ENCODE measurements at regions of chr11 and their contacts with region 1.

Region 1: GRCh38 chr11:33829433-33830141 is 55.3 kb upstream of the FBXO3 start:
- DNase-seq: peak; percentile 71 to 74
- H3K4me3 ChIP-seq: 0 out of 2 replicates have a peak overlapping the region, but pooled peaks have one; percentile 4
- H3K4me1 ChIP-seq: no peaks in the 10 kb centered on the region
- H3K27me3 ChIP-seq: peaks cover 26% of the 10 kb centered on the region

Region 2: GRCh38 chr11:33362051-33362910 is 467.3 kb before region 1 on chr11:
- in situ Hi-C with region 1: loop called (anchors 25 kb)
- DNase-seq: peak in 1 of 2 experiments; percentile 46
- H3K4me3 ChIP-seq: no peak overlapping the region
- H3K4me1 ChIP-seq: no peaks in the 10 kb centered on the region
- H3K27me3 ChIP-seq: no peaks in the 10 kb centered on the region; the same call in 1 of the 2 replicates

Region 3: GRCh38 chr11:33557201-33557600 is 272.4 kb before region 1 on chr11:
- in situ Hi-C with region 1: no loop called
- DNase-seq: peak in 1 of 2 experiments; percentile 30
- H3K4me3 ChIP-seq: no peak overlapping the region
- H3K4me1 ChIP-seq: no peaks in the 10 kb centered on the region
- H3K27me3 ChIP-seq: no peaks in the 10 kb centered on the region

Region 4: GRCh38 chr11:34013898-34014571 is 184.4 kb after region 1 on chr11:
- in situ Hi-C with region 1: no loop called
- DNase-seq: no peak
- H3K4me3 ChIP-seq: no peak overlapping the region
- H3K4me1 ChIP-seq: no peaks in the 10 kb centered on the region
- H3K27me3 ChIP-seq: no peaks in the 10 kb centered on the region

Region 5: DNA sequence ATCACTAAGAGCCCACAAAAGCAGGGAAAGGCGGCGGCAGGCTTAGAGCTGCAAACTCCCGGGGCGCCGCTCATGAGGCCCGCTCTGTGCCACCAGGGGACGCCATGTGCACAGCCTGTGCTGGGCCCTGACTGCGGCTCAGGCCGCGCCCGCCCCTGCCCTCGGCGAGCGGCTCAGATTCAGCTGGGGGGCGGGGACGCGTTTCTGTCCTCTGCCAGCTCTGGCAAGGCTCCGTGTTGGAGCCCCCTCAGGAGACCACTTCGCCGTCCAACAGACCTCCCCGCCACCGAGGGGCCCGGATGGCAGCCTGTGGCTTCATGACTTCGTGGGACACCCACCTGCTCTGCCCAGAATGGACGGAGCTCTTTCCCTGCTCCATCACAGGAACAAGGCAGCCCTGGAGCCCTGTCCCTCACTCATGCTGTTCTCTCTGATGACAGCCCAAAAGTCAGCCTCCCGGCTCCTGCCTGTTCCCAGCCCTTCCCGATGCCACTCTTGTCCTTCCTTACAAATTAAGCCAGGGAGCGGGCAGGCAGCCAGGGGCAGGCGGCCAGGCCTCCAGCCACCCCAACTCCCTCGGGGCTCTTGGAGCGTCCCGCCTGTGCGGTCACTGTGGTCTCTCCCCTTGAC is 344.9 kb after region 1 on chr11:
- in situ Hi-C with region 1: no loop called
- DNase-seq: peak; percentile 46 to 90
- H3K4me3 ChIP-seq: peak overlapping the region; percentile 13
- H3K4me1 ChIP-seq: peaks cover 11% of the 10 kb centered on the region
- H3K27me3 ChIP-seq: no peaks in the 10 kb centered on the region

Region 6: GRCh38 chr11:34243726-34244464 is 414.3 kb after region 1 on chr11:
- in situ Hi-C with region 1: no loop called
- DNase-seq: no peak
- H3K4me3 ChIP-seq: no peak overlapping the region
- H3K4me1 ChIP-seq: peaks cover 8% of the 10 kb centered on the region; the same call in 1 of the 2 replicates
- H3K27me3 ChIP-seq: no peaks in the 10 kb centered on the region

Region 7: DNA sequence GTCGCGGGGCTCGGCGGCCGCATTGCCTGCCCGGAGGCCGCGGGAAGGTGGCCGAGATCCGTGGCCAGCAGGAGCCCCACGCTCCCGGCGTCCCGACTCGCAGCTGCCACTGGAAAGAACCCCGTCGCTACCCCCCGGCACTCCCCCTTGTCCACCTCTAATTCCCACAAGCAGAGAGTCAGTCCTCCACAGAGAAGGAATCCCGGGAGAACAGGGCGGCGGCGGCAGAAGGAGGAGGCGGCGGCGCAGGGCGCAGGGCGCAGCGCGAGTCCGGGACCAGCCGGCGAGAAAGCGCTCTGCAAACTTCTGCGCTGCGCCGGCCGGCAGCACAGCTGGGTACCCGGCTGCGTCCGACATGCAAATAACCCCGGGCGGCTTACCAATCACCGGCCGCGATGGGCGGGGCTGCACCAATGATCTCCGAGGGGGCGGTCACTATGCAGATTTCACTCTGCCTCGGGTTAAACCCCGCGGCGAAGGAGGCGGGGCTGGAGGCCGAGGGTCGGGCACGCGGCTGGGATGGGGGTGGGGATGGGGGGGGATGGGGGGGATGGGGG is 528.2 kb after region 1 on chr11 and contains the start of gene ABTB2:
- in situ Hi-C with region 1: loop called (anchors 25 kb)
- DNase-seq: peak; percentile 96 to 99
- H3K4me3 ChIP-seq: peak within 1 kb of the TSS; percentile 54
- H3K4me1 ChIP-seq: peaks cover 6% of the 10 kb centered on the region
- H3K27me3 ChIP-seq: peaks cover 5% of the 10 kb centered on the region; the same call in 1 of the 2 replicates

Region 8: GRCh38 chr11:34492806-34493414 is 663.3 kb after region 1 on chr11:
- in situ Hi-C with region 1: loop called (anchors 25 kb)
- DNase-seq: peak; percentile 79 to 81
- H3K4me3 ChIP-seq: no peak overlapping the region
- H3K4me1 ChIP-seq: no peaks in the 10 kb centered on the region; the same call in 1 of the 2 replicates
- H3K27me3 ChIP-seq: no peaks in the 10 kb centered on the region